Activated T-helper 2 cell treated with anti-CD3 and anti-CD28 coated beads, Interferon-gamma antibody, Interleukin-2, Interleukin-4, amounts not matched to agents 10 μg/mL and 5 μg/mL and 100 μg/mL, durations not matched to agents 14 hours and 24 hours and 36 hours (primary cell): ENCODE measurements at regions of chr15 and their contacts with region 1.

Region 1: DNA sequence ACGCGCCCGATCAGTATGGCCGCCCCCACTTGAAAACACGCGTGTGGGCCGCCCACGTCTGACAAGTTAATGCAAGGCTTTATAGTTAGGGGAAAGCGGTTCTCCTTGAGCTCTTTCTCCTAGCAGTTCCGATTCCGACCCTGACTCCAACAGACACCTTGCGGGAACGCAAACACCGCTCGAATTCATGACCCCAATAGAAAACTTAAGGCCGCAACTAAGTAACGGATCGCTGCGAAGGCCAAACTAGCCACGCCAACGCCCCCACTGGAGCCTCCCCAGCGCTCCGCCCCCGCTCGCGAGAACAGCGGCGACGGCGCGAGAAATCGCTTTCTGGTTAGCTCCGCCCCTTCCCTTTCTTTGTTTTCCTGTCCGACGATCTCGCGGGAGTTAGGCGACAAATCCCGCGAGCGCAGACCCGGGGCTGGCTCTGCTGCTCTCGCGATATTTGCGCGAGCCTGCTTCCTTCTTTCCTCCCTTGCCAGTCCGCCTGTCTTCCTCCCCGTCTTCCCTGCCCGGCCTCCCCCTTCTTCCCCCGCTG is at the start of gene IREB2:
- DNase-seq: peak; percentile 98
- H3K4me3 Mint-ChIP-seq: peak within 1 kb of the TSS; percentile 87
- H3K27ac Mint-ChIP-seq: peak within 1 kb of the TSS; percentile 94
- H3K4me1 Mint-ChIP-seq: peaks cover 37% of the 10 kb centered on the region
- H3K27me3 Mint-ChIP-seq: no peaks in the 10 kb centered on the region
- total RNA-seq, gene IREB2: 97.8 and 101 TPM in 2 replicates

Region 2: GRCh38 chr15:78149068-78149804 is 288.6 kb before region 1 on chr15 and contains the start of gene IDH3A:
- intact Hi-C with region 1: loop called (anchors 10 kb)
- DNase-seq: peak; percentile 98
- H3K4me3 Mint-ChIP-seq: peak within 1 kb of the TSS; percentile 93
- H3K27ac Mint-ChIP-seq: peak within 1 kb of the TSS; percentile 84
- H3K4me1 Mint-ChIP-seq: peaks cover 39% of the 10 kb centered on the region
- H3K27me3 Mint-ChIP-seq: no peaks in the 10 kb centered on the region
- total RNA-seq, gene IDH3A: 132 and 152 TPM in 2 replicates

Region 3: DNA sequence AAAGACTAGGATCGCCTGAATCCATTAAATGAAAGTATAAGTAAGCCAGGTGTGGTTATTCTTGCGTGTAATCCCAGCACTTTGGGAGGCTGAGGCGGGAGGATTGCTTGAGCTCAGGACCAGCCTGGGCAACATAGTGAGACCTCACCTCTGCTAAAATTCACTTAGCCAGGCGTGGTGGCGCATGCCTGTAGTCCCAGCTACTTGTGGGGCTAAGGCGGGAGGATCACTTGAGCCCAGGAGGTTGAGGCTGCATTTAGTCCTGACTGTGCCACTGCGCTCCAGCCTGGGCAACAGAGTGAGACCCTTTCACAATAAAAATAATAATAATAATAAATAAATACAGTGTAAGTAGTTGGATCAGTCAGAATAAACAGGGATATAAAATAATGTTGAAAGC is 44.1 kb after region 1 on chr15:
- intact Hi-C with region 1: loop called (anchors 5 kb)
- DNase-seq: no peak
- H3K4me3 Mint-ChIP-seq: no peak overlapping the region
- H3K27ac Mint-ChIP-seq: no peak overlapping the region
- H3K4me1 Mint-ChIP-seq: peaks cover 3% of the 10 kb centered on the region
- H3K27me3 Mint-ChIP-seq: no peaks in the 10 kb centered on the region

Region 4: DNA sequence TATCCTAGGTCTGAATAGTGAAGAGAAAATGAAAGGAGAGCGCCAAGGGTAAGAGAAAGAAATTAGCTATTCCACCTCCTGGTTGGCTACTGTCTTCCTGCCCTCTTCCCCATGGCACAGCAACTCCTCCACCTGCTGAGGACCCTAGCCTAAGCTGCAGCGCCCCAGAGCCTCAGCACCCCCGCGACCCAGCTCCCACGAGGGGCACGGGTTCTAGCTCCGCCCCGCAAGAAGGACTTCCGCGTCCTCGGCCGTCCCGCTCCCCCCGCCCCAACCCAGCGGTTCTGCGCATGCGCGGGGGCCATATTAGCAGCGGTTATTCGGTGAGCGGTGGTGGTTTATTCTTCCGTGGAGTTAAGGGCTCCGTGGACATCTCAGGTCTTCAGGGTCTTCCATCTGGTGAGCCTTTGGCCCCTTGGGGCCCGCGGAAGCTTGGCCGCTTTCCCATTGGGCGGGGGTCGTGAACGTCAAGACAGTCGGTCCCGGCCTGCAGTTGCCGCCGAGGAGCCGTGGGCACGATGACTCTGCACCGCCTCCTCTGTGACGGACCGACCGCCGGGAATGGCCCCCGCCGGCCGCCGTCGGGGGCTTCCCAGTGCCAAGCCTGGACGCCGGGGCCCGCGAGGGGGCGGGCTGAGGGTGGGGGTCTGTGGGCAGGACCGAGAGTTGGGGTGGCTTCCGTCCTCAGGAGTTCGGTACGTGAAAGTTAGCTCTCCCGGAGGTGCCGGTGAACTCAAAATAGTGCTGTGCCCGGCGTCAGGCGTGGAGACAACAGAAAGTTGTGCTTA is 102.5 kb after region 1 on chr15 and contains the start of gene PSMA4:
- intact Hi-C with region 1: loop called (anchors 2 kb)
- DNase-seq: peak; percentile 92
- H3K4me3 Mint-ChIP-seq: peak within 1 kb of the TSS; percentile 97
- H3K27ac Mint-ChIP-seq: peak within 1 kb of the TSS; percentile 95
- H3K4me1 Mint-ChIP-seq: peaks cover 29% of the 10 kb centered on the region
- H3K27me3 Mint-ChIP-seq: peaks cover 1% of the 10 kb centered on the region
- total RNA-seq, gene PSMA4: 330 and 331 TPM in 2 replicates